Psoas muscle (tissue), 8 donors: ENCODE measurements at regions of chr14 and their contacts with region 1.

Region 1: GRCh38 chr14:64294672-64295413 is 672 bp upstream of the ESR2 start:
- DNase-seq: peak; percentile 74 to 87
- ATAC-seq: peak; percentile 92 to 98 (median 96)
- H3K4me3 ChIP-seq: peak overlapping the region; percentile 68
- H3K27ac ChIP-seq: no peak overlapping the region
- H3K4me1 ChIP-seq: peaks cover 7% of the 10 kb centered on the region
- H3K27me3 ChIP-seq: peaks cover 0 to 11% (median 0%) of the 10 kb centered on the region in 3 donors
- CTCF ChIP-seq: peak; percentile 89

Region 2: GRCh38 chr14:64026600-64026999 is 268.2 kb before region 1 on chr14:
- intact Hi-C with region 1: loop called in 1 of 2 experiments (anchors 10 kb)
- DNase-seq: no peak
- ATAC-seq: no peak
- H3K4me3 ChIP-seq: no peak overlapping the region
- H3K27ac ChIP-seq: no peak overlapping the region
- H3K4me1 ChIP-seq: no peaks in the 10 kb centered on the region
- H3K27me3 ChIP-seq: no peaks in the 10 kb centered on the region
- CTCF ChIP-seq: no peak

Region 3: DNA sequence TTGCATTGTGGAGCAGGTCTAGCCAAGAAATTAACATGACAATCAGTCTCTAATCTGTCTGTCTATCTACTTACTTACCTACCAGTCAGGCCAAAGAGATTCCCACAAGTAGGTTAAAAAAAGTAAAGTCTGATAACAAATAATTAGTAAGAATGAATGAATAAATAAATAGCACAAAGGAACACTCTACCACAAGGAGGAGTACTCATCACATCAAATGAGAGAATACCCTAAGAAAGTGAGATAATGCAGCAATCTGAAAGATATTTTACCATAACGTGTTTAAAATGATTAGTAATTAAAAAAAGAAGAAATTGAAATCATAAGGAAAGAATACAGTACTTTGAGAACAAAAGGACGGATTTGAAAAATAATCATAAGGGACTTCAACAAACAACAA is 254.8 kb before region 1 on chr14:
- intact Hi-C with region 1: loop called in 1 of 2 experiments (anchors 10 kb)
- DNase-seq: no peak
- ATAC-seq: no peak
- H3K4me3 ChIP-seq: no peak overlapping the region
- H3K27ac ChIP-seq: no peak overlapping the region
- H3K4me1 ChIP-seq: no peaks in the 10 kb centered on the region
- H3K27me3 ChIP-seq: no peaks in the 10 kb centered on the region
- CTCF ChIP-seq: no peak

Region 4: GRCh38 chr14:64112867-64113678 is 181.8 kb before region 1 on chr14:
- intact Hi-C with region 1: no loop called
- DNase-seq: peak; percentile 61 to 86
- ATAC-seq: peak; percentile 80 to 83 (median 82)
- H3K4me3 ChIP-seq: peak overlapping the region; percentile 59
- H3K27ac ChIP-seq: peak overlapping the region; percentile 95
- H3K4me1 ChIP-seq: peaks cover 41% of the 10 kb centered on the region
- H3K27me3 ChIP-seq: no peaks in the 10 kb centered on the region
- CTCF ChIP-seq: no peak

Region 5: DNA sequence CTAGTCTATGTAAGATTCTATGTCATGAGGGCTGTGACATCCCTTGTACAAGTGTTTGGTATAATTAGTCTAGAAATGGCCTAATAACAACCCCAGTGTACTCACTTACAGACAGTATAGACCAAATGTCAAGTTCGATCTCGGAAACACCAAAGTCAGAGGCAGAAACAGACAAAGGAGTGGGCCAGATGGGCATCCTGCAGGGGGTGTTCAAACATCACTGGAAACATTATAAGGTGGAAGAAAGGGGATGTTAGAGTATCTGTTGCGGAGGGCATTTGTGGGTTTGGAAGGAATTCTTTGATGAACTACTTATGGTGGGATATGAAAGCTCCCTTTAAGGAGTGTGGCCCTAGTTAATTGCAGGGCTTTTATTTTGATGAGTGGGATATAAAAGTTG is 135.3 kb before region 1 on chr14:
- intact Hi-C with region 1: loop called in 1 of 2 experiments (anchors 5 kb)
- DNase-seq: no peak
- ATAC-seq: peak in 1 of 4 donors; percentile 36
- H3K4me3 ChIP-seq: no peak overlapping the region
- H3K27ac ChIP-seq: no peak overlapping the region
- H3K4me1 ChIP-seq: no peaks in the 10 kb centered on the region
- H3K27me3 ChIP-seq: no peaks in the 10 kb centered on the region
- CTCF ChIP-seq: no peak

Region 6: DNA sequence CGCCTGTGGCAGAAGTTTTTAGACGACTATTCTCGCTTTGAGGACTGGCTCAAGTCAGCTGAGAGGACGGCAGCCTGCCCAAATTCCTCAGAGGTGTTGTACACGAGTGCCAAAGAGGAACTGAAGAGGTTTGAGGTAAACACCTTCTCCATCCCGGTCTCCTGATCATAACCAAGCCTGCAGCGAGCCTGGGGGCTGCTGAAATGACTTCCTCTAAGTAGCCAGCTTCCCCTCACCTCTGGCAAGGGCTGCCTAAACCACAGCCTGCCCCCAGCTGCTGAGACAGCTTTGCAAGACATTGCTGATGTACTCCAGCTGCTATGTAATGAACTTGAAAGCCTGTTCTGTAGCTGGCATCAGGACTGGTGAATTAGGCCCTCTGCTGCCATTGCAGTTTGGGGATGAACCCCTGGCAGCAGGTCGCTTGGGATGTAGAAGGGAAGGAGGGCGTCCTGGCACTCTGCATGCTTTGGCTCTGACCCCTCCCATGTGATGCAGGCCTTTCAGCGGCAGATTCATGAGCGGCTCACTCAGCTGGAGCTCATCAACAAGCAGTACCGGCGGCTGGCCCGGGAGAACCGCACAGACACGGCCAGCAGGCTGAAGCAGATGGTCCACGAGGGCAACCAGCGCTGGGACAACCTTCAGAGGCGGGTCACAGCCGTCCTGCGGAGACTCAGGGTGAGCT is 85.3 kb before region 1 on chr14:
- intact Hi-C with region 1: loop called in 1 of 2 experiments (anchors 10 kb)
- DNase-seq: peak in 1 of 2 donors; percentile 54
- ATAC-seq: peak; percentile 56 to 69 (median 60)
- H3K4me3 ChIP-seq: no peak overlapping the region
- H3K27ac ChIP-seq: peak overlapping the region; percentile 79
- H3K4me1 ChIP-seq: peaks cover 28% of the 10 kb centered on the region
- H3K27me3 ChIP-seq: no peaks in the 10 kb centered on the region
- CTCF ChIP-seq: no peak